Activated CD4-positive, alpha-beta memory T cell treated with anti-CD3 and anti-CD28 coated beads for 36 hours (primary cell): ENCODE measurements at regions of chr16 and their contacts with region 1.

Region 1: GRCh38 chr16:31873556-31874365 is at the start of gene ZNF267:
- DNase-seq: peak; percentile 96
- H3K4me3 Mint-ChIP-seq: peak within 1 kb of the TSS; percentile 90
- H3K27ac Mint-ChIP-seq: peak within 1 kb of the TSS; percentile 99
- H3K4me1 Mint-ChIP-seq: peaks cover 69% of the 10 kb centered on the region
- H3K27me3 Mint-ChIP-seq: no peaks in the 10 kb centered on the region
- total RNA-seq, gene ZNF267: 72.1 to 76.4 TPM

Region 2: GRCh38 chr16:31713071-31713944 is 160.5 kb before region 1 on chr16:
- CTCF ChIA-PET with region 1: interaction called, 7 read pairs
- POLR2A ChIA-PET with region 1: interaction called, 11 read pairs
- intact Hi-C with region 1: loop called (anchors 2 kb)
- DNase-seq: peak; percentile 95
- H3K4me3 Mint-ChIP-seq: peak overlapping the region; percentile 99
- H3K27ac Mint-ChIP-seq: peak overlapping the region; percentile 98
- H3K4me1 Mint-ChIP-seq: peaks cover 43% of the 10 kb centered on the region
- H3K27me3 Mint-ChIP-seq: no peaks in the 10 kb centered on the region

Region 3: DNA sequence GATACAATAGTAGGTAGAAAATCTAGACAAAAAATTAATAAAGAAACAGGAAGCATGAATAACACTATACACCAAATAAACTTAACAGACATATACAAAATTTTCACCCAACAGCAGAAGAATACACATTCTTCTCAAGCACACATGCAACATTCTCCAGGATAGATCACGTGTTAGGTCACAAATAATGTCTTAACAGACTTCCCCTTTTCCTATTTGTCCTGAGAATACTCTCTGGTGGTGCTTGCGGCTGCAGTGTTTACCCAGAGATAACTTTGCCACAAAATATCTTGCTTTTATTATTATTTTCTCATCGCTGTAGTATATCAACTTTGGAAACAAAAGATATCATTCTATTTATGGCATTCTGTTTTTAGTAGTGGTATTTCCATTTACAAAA is 40.7 kb before region 1 on chr16:
- CTCF ChIA-PET with region 1: no interaction called
- POLR2A ChIA-PET with region 1: no interaction called
- intact Hi-C with region 1: no loop called
- DNase-seq: no peak
- H3K4me3 Mint-ChIP-seq: no peak overlapping the region
- H3K27ac Mint-ChIP-seq: no peak overlapping the region
- H3K4me1 Mint-ChIP-seq: no peaks in the 10 kb centered on the region
- H3K27me3 Mint-ChIP-seq: peaks cover 4% of the 10 kb centered on the region

Region 4: GRCh38 chr16:31888735-31889134 is 15.0 kb after region 1 on chr16:
- CTCF ChIA-PET with region 1: interaction called, 7 read pairs
- POLR2A ChIA-PET with region 1: interaction called, 18 read pairs
- intact Hi-C with region 1: loop called (anchors 1 kb)
- DNase-seq: no peak
- H3K4me3 Mint-ChIP-seq: peak overlapping the region; percentile 31
- H3K27ac Mint-ChIP-seq: peak overlapping the region; percentile 91
- H3K4me1 Mint-ChIP-seq: peaks cover 81% of the 10 kb centered on the region
- H3K27me3 Mint-ChIP-seq: no peaks in the 10 kb centered on the region